CD8-positive, alpha-beta T cell (primary cell): ENCODE measurements at regions of chr7 and their contacts with region 1.

Region 1: GRCh38 chr7:28433699-28434219 is 21.4 kb downstream of the CREB5 start:
- DNase-seq: no peak
- ATAC-seq: no peak
- H3K4me3 ChIP-seq: no peak overlapping the region
- H3K4me3 Mint-ChIP-seq: no peak overlapping the region
- H3K27ac ChIP-seq: no peak overlapping the region
- H3K27ac Mint-ChIP-seq: no peak overlapping the region
- H3K4me1 ChIP-seq: no peaks in the 10 kb centered on the region
- H3K4me1 Mint-ChIP-seq: no peaks in the 10 kb centered on the region
- H3K27me3 ChIP-seq: no peaks in the 10 kb centered on the region
- H3K27me3 Mint-ChIP-seq: peaks cover 19% of the 10 kb centered on the region
- CTCF ChIP-seq: no peak

Region 2: GRCh38 chr7:28378574-28379149 is 55.1 kb before region 1 on chr7:
- CTCF ChIA-PET with region 1: no interaction called
- POLR2A ChIA-PET with region 1: no interaction called
- intact Hi-C with region 1: no loop called
- DNase-seq: no peak
- ATAC-seq: no peak
- H3K4me3 ChIP-seq: no peak overlapping the region
- H3K4me3 Mint-ChIP-seq: no peak overlapping the region
- H3K27ac ChIP-seq: no peak overlapping the region
- H3K27ac Mint-ChIP-seq: no peak overlapping the region
- H3K4me1 ChIP-seq: no peaks in the 10 kb centered on the region
- H3K4me1 Mint-ChIP-seq: no peaks in the 10 kb centered on the region
- H3K27me3 ChIP-seq: no peaks in the 10 kb centered on the region
- H3K27me3 Mint-ChIP-seq: peaks cover 2% of the 10 kb centered on the region
- CTCF ChIP-seq: no peak

Region 3: GRCh38 chr7:28411876-28412662 is 21.7 kb before region 1 on chr7 and contains the start of gene CREB5:
- CTCF ChIA-PET with region 1: no interaction called
- POLR2A ChIA-PET with region 1: no interaction called
- intact Hi-C with region 1: loop called in 1 of 2 experiments (anchors 2 kb)
- DNase-seq: peak in 1 of 9 experiments; percentile 19
- ATAC-seq: no peak
- H3K4me3 ChIP-seq: no peak within 1 kb of the TSS
- H3K4me3 Mint-ChIP-seq: peak within 1 kb of the TSS; percentile 72
- H3K27ac ChIP-seq: no peak within 1 kb of the TSS
- H3K27ac Mint-ChIP-seq: no peak within 1 kb of the TSS
- H3K4me1 ChIP-seq: peaks cover 20% of the 10 kb centered on the region
- H3K4me1 Mint-ChIP-seq: peaks cover 27% of the 10 kb centered on the region
- H3K27me3 ChIP-seq: peaks cover 18 to 35% of the 10 kb centered on the region in 2 experiments
- H3K27me3 Mint-ChIP-seq: peaks cover 69% of the 10 kb centered on the region
- CTCF ChIP-seq: no peak
- total RNA-seq, gene CREB5: not detected